MCF 10A (cell line): ENCODE measurements at regions of chr1 and their contacts with region 1.

Region 1: GRCh38 chr1:205335643-205336091 is 14.1 kb upstream of the NUAK2 start:
- DNase-seq: peak; percentile 97
- H3K4me3 Mint-ChIP-seq: no peak overlapping the region
- H3K27ac Mint-ChIP-seq: no peak overlapping the region
- H3K4me1 Mint-ChIP-seq: peaks cover 4% of the 10 kb centered on the region
- H3K27me3 Mint-ChIP-seq: peaks cover 17% of the 10 kb centered on the region
- CTCF ChIP-seq: peak; percentile 100

Region 2: DNA sequence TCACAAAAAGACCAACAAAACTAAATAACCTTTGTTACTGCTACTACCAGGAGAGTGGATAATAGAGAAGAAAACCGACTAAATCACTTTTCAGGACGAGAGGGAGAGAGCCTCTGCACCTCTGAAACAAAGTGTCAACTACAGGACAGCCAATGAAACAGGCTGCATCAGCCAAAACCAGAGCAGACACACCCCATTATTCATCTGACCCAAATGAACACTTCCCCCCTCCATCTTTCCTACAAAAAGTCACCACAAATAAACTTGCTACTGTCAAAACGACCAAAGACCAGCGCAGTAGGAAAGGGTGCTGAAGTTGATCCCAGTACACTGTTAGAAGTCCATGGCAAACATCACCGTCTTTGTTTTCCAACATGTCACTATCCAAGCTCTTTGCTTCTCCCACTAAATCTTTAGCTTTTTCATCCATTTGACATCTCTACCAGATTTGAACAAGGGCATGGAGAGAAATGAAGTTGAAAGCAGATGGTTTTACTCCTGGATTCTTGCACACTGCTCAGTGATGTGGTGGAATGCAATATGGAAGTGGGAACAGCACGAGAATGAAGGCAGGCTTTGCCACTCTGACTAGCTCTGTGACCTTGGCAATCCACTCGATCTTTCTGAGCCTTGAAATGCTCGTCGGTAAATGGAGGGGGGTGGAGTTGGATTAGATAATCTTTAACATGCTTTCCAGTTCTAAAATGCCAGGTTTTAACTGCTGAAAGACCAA is 144.7 kb before region 1 on chr1:
- CTCF ChIA-PET with region 1: no interaction called
- POLR2A ChIA-PET with region 1: no interaction called
- intact Hi-C with region 1: no loop called
- DNase-seq: no peak
- H3K4me3 Mint-ChIP-seq: no peak overlapping the region
- H3K27ac Mint-ChIP-seq: no peak overlapping the region
- H3K4me1 Mint-ChIP-seq: peaks cover 23% of the 10 kb centered on the region
- H3K27me3 Mint-ChIP-seq: no peaks in the 10 kb centered on the region
- CTCF ChIP-seq: no peak

Region 3: GRCh38 chr1:205294175-205294913 is 41.3 kb before region 1 on chr1:
- CTCF ChIA-PET with region 1: interaction called, 1,857 read pairs
- POLR2A ChIA-PET with region 1: no interaction called
- intact Hi-C with region 1: no loop called
- DNase-seq: peak; percentile 97
- H3K4me3 Mint-ChIP-seq: no peak overlapping the region
- H3K27ac Mint-ChIP-seq: peak overlapping the region; percentile 77
- H3K4me1 Mint-ChIP-seq: peaks cover 55% of the 10 kb centered on the region
- H3K27me3 Mint-ChIP-seq: no peaks in the 10 kb centered on the region
- CTCF ChIP-seq: no peak

Region 4: DNA sequence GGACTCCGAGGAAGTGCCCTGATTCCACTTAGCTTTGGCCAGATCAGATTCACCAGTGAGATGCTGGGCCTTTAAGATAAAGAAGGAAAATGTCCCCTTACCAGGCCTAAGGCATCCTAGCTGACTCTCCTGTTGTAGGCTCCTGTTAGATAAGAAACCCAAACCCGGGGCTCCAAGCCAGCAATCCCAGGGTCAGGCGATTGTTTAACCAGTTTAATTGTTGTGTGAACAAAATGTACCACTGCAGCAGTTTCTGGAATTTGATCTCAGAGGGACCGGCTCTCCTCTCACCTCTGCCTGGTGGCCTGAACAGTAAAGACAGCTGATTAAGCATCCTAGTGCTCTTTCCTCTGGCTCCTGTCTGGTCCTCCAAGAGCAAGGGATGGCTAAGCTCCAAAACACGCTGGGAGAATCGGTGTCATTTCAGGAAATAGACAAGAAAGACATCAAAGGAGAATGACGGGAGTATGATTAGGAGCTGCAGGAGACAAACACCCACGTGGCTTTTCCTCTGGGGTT is 30.3 kb after region 1 on chr1:
- CTCF ChIA-PET with region 1: interaction called, 19 read pairs
- POLR2A ChIA-PET with region 1: interaction called, 3 read pairs
- intact Hi-C with region 1: no loop called
- DNase-seq: peak; percentile 48
- H3K4me3 Mint-ChIP-seq: no peak overlapping the region
- H3K27ac Mint-ChIP-seq: no peak overlapping the region
- H3K4me1 Mint-ChIP-seq: peaks cover 7% of the 10 kb centered on the region
- H3K27me3 Mint-ChIP-seq: peaks cover 19% of the 10 kb centered on the region
- CTCF ChIP-seq: no peak

Region 5: GRCh38 chr1:205430696-205431305 is 95.1 kb after region 1 on chr1:
- CTCF ChIA-PET with region 1: interaction called, 10 read pairs
- POLR2A ChIA-PET with region 1: no interaction called
- intact Hi-C with region 1: no loop called
- DNase-seq: peak; percentile 50
- H3K4me3 Mint-ChIP-seq: peak overlapping the region; percentile 56
- H3K27ac Mint-ChIP-seq: no peak overlapping the region
- H3K4me1 Mint-ChIP-seq: no peaks in the 10 kb centered on the region
- H3K27me3 Mint-ChIP-seq: peaks cover 56% of the 10 kb centered on the region
- CTCF ChIP-seq: peak; percentile 89

Region 6: DNA sequence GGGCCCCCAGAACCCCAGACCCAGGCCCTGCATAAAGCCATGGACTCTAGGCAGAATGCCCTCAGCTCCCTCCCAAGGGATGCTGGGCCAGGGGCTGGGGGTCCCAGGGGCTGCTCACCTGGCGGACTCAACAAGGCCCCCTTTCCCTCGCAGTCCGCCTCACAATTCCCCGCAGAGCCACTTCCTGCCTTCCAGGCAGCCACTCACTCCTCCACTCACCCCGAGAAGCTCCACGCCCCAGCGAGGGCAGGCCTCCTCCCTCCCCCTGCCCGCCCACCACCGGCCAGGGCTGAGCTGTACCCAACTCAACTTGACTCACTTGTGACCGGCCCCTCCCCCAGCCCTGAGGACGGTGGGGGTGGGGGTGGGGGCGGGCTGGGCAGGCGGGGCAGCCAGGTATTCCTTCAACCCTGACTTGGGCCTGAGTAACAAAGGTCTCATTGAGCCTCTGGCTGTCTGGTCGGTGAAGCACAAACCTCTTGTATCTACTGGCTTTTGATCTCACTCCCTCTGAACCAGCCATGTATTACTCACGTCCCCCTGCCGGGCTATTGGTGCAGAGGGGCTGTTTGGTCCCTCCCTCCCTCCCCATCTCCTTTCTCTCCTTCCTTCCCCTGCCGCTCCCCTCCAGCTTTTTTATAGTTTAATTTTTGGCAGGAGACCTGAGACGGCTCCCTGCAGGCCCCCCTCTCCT is 114.2 kb after region 1 on chr1:
- CTCF ChIA-PET with region 1: interaction called, 10 read pairs
- POLR2A ChIA-PET with region 1: no interaction called
- intact Hi-C with region 1: no loop called
- DNase-seq: peak; percentile 93
- H3K4me3 Mint-ChIP-seq: peak overlapping the region; percentile 89
- H3K27ac Mint-ChIP-seq: peak overlapping the region; percentile 98
- H3K4me1 Mint-ChIP-seq: peaks cover 36% of the 10 kb centered on the region
- H3K27me3 Mint-ChIP-seq: peaks cover 40% of the 10 kb centered on the region
- CTCF ChIP-seq: peak; percentile 25

Region 7: DNA sequence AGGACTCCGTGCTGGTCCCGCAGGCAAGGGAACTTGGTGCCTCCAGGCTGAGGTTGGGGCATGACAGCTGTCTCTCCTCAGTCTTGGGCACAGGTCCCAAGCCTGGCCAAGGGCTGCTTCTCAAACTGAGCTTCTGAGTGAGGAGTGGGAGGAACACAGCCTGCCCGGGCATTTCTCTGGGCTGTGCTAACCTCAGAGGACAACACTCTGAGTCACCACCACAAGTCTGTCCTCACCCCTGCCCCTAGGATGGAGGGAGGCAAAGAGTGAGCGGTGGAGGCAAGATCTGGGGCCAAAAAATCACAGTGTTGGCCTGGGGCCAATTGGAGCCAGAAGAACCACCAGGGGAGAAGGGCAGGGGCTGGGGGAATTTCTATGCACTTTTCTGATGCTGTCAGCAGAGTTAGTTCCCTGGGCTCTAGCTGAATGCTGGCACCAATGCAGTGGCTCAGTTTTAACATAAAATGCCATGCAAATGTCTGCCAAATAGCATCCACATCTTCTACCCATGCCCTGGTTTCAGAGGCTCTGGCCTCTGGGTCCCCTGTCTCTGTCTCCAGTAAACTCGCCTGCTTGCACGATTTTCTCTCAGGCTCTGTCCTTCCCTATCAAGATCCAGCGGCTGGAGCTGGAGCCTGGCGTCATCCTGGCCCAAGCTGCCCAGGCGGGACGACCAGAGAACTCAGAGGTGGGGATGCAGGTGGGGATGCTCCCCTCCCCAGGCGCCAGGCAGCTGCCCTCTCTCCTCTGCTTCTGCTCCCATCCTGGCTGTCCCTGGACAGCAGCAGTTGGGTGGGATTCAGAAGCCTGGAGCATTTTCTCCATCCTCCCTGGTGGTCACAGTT is 157.8 kb after region 1 on chr1:
- CTCF ChIA-PET with region 1: interaction called, 141 read pairs
- POLR2A ChIA-PET with region 1: interaction called, 3 read pairs
- intact Hi-C with region 1: no loop called
- DNase-seq: peak; percentile 99
- H3K4me3 Mint-ChIP-seq: peak overlapping the region; percentile 53
- H3K27ac Mint-ChIP-seq: peak overlapping the region; percentile 86
- H3K4me1 Mint-ChIP-seq: peaks cover 38% of the 10 kb centered on the region
- H3K27me3 Mint-ChIP-seq: no peaks in the 10 kb centered on the region
- CTCF ChIP-seq: no peak